ENCODE measurements at regions of chr3 and their contacts with region 1.

Region 1: DNA sequence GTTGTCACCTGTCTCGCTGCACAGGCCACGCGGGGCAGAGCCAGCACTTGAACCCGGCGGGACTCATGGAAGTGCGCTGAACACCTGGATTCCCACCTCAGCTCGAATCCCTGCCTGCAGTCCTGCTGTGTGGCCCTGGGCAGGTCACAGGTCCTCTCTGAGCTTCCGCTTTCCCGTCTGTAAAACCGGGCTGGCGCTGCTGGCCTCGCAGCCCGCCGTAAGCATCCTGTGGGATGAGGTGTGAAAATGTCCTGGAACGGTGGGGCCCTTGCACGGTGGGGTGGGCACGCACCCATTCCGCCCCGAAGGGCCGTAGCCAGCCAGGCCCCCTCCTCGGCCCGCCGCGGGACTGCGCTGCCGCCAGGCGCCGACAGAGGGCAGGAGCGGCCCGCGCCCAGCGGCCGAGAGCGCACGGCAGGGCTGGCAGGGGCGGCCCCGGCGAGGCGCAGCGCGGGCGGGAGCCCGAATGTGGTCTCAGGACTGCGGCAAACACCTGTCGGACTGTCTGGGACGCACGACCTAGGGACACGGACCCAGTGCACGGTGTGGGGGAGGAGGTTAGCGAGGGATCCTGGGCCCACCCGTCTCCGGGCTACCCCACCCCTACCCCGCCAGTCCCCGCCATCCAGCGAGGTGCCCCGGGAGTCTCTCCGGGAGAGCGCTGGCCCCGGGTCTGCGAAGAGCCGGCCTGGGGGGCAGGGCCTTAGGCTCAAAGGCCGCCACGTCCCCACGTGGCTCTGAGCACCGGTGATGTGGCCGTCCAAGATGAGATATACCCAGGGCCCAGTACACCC is 40.4 kb downstream of the DNAJB8 start:
- DNase-seq: peak; percentile 72
- ATAC-seq: peak; percentile 93

Region 2: GRCh38 chr3:128603811-128604775 is 177.8 kb after region 1 on chr3:
- intact Hi-C with region 1: loop called (anchors 10 kb)
- DNase-seq: no peak
- ATAC-seq: no peak

Region 3: GRCh38 chr3:128650096-128651050 is 224.0 kb after region 1 on chr3 and contains the start of gene RPN1:
- intact Hi-C with region 1: no loop called
- DNase-seq: peak; percentile 98
- ATAC-seq: peak; percentile 99
- total RNA-seq, gene RPN1: 104 TPM